ENCODE measurements at regions of chr10 and their contacts with region 1.

Region 1: DNA sequence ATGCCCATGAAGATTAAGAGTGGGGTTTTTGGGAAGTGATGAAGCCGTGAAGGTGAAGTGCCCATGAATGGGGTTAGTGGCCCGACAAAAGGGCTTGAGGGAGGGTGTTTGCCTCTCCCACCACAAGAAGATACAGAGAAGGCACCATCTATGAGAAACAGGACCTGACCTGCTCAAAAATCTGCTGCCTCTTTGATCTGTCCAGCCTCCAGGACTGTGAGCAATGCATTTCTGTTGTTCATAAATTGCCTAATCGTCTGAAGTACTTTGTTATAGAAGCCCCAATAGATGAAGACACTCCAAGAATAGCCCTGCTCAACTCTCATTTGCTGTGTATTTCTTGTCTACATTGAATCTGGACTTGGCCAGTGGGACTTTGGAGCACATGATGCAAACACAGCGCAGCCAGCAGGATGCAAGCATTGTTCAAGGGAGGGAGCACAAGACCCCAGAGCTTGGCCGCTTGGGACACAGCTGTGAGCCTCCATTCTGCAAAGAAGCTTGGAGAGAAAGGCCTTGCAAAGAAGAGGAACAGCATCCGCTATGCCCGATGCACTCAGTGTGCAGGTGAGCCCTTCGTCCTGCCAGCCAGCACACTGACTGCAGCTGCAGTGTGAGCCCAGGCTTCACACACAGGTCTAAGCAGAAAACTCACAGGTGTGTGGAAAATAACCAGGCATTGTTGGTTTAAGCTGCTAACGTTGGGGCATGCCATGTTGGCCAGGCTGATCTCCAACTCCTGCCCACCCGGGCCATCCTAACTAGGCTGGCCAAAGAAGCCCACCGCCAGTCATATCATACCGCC is 73.2 kb upstream of the KLF6 start:
- DNase-seq: no peak
- H3K4me3 ChIP-seq: no peak overlapping the region
- H3K27ac ChIP-seq: no peak overlapping the region
- H3K4me1 ChIP-seq: peaks cover 1% of the 10 kb centered on the region
- H3K27me3 ChIP-seq: no peaks in the 10 kb centered on the region
- CTCF ChIP-seq: no peak

Region 2: GRCh38 chr10:3961082-3961481 is 102.8 kb after region 1 on chr10:
- intact Hi-C with region 1: loop called (anchors 5 kb)
- DNase-seq: no peak
- H3K4me3 ChIP-seq: no peak overlapping the region
- H3K27ac ChIP-seq: no peak overlapping the region
- H3K4me1 ChIP-seq: no peaks in the 10 kb centered on the region
- H3K27me3 ChIP-seq: no peaks in the 10 kb centered on the region
- CTCF ChIP-seq: no peak

Region 3: DNA sequence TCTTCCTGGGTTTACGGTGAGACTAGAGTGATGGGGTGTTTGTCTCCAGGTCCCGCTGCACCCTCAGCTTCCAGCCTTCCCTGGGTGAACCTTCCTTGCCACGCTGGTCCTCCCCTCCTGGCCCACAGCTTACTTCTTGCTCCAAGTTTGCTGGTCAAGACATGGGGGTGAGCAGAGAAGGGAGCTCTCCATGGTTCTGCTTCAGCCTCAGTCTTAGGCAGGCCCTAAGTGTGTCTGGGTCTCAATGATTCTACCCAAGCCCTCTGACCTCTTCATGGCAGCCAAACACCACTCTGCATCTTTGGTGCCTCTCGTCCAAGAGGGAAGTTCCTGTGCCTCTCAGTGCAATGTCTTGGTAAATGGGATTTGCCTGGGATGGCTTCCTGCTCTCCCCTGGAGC is 283.2 kb after region 1 on chr10:
- intact Hi-C with region 1: no loop called
- DNase-seq: no peak
- H3K4me3 ChIP-seq: no peak overlapping the region
- H3K27ac ChIP-seq: no peak overlapping the region
- H3K4me1 ChIP-seq: no peaks in the 10 kb centered on the region
- H3K27me3 ChIP-seq: no peaks in the 10 kb centered on the region
- CTCF ChIP-seq: no peak